Right ventricle myocardium inferior (tissue), 1 donor: ENCODE measurements at regions of chr16 and their contacts with region 1.

Region 1: DNA sequence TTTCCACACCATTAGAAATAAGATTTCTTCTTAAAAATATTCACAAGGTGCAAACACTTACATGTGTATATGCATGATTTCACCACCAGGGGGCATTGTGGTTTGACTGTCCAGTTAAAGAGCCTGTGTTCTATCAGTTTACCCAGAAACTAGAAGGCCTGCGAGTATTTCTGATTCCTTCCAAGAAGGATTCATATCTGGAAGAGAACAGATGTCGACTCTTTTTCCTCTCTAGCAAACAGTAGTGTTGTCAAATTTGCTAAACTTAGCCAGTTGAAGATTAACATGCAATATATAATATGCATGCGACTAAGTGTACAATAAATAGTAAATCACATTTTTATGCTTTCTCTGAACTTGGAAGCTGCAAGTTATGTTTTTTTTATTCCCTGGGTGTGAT is 404.1 kb downstream of the WWOX start:
- DNase-seq: no peak
- ATAC-seq: no peak

Region 2: GRCh38 chr16:78259873-78260272 is 243.7 kb before region 1 on chr16:
- intact Hi-C with region 1: no loop called
- DNase-seq: no peak
- ATAC-seq: no peak

Region 3: GRCh38 chr16:78563905-78564304 is 60.3 kb after region 1 on chr16:
- intact Hi-C with region 1: no loop called
- DNase-seq: no peak
- ATAC-seq: no peak

Region 4: DNA sequence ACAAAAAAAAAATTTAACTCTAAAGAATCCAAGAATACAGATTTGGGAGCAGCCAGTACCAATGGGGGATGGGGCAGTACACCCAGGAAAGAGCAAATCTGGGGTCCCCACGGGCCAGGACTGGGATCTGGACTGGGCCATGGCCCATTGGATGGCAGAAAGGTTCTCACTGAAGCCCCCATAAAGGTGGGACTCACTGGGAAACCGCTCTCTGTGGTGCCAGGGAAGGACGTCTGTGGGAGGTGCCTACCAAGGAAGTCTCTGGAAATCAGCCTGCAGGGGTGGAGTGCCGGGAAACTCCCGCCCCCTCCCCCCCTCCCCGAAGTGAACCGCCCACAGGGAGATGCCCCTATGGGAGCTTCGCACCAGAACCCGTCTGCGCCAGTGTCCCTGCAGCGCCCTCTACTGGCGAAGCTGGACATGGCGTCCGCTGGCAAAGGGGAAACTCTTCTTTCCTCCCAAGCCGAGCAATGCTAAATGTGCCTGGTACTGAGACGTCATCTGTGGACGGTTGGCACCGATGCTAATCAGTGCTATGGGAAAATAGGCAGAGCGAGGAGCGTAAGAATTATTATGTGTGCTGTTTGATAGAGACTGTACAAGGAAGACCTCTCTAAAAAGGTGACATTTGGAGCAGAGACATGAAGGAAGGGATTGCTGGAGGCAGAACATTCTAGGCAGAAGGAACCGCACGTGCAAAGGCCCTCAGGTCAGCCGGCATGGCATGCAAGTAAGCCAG is 266.9 kb after region 1 on chr16:
- intact Hi-C with region 1: loop called (anchors 1 kb)
- DNase-seq: peak; percentile 81
- ATAC-seq: peak; percentile 73

Region 5: DNA sequence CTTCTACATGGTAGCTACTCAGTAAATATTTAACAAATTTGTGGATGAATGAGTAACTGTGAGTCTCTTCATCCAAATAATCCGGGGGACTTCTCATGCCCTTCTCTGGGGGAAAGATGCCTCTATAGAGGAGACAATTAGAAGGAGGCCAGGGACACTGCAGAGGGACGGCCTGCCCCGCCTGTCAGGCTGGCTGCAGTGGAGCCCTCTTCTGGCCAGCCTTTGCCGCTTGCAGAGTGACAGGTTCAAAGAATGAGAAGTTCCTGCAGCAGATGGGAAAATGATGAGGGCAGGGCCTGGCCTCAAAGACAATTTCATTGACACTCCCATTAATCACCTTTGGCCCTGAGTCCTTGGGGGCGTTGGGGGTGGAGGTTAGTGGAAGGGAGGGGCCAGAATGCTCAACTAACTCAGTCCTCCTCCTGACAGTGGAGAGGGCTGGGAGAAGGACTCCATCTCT is 757.9 kb after region 1 on chr16:
- intact Hi-C with region 1: loop called (anchors 5 kb)
- DNase-seq: peak; percentile 69
- ATAC-seq: peak; percentile 47